Naive thymus-derived CD4-positive, alpha-beta T cell (primary cell): ENCODE measurements at regions of chr2 and their contacts with region 1.

Region 1: DNA sequence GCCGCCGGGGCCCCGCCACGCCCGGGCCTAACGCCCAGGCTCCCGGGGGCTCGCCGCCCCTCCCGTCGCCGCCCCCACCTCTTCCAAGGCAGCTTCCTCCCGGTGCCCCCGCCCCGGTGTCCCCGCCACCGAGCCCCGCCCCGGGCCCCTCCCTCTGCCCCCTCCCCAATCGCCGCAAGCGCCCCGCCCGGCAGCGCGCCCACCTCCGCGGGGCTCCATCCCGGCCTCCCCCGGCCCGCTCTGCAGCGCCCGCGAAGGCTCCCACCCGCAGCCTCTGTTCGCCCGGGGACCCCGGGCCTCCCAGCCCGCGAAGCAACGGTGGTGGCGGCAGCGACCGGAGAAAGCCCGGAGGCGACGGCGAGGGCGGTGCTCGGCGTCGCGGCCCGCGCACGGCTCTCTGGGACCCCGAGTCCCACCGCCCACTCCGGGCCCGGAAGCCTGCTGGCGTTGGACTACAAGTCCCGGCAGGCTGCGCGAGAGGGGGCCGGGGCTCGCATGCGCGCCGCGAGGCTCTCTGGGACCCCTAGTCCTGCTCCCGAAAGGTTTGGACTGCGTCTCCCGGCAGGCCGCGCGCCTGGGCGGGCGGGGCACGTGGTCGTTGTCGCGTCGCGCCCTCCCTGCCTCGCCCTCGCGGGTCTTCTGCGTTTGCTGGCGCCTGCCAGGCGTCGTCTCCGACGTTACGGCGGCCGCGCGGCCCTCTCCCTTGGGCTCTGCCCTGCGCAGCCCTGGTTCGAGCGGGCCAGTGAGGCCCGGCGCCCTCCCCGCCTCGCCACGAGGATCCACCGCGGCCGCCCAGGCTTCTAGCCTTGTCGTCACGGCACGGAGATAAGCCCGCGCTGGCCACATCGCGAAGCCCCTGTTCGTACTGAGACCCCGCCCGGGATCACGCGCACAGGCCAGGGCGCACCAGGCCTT is at the start of gene STK25:
- DNase-seq: peak; percentile 93 to 98 (median 97)
- ATAC-seq: peak; percentile 96
- H3K4me3 ChIP-seq: peak within 1 kb of the TSS; percentile 70
- H3K4me3 Mint-ChIP-seq: peak within 1 kb of the TSS; percentile 80 to 92 (median 86)
- H3K27ac ChIP-seq: peak within 1 kb of the TSS; percentile 81
- H3K27ac Mint-ChIP-seq: peak within 1 kb of the TSS; percentile 67 to 91 (median 85)
- H3K4me1 ChIP-seq: peaks cover 7 to 16% of the 10 kb centered on the region in 2 donors
- H3K4me1 Mint-ChIP-seq: peaks cover 17 to 33% (median 24%) of the 10 kb centered on the region in 7 donors
- H3K27me3 ChIP-seq: no peaks in the 10 kb centered on the region
- H3K27me3 Mint-ChIP-seq: peaks cover 0 to 1% (median 0%) of the 10 kb centered on the region in 5 donors
- total RNA-seq, gene STK25: 90.8 to 170 (median 115) TPM

Region 2: GRCh38 chr2:240021488-240022104 is 1486.9 kb before region 1 on chr2:
- CTCF ChIA-PET with region 1: no interaction called
- POLR2A ChIA-PET with region 1: no interaction called
- intact Hi-C with region 1: loop called in 1 of 2 experiments (anchors 5 kb)
- DNase-seq: peak; percentile 18 to 68 (median 51)
- ATAC-seq: peak; percentile 43
- H3K4me3 ChIP-seq: no peak overlapping the region
- H3K4me3 Mint-ChIP-seq: no peak overlapping the region
- H3K27ac ChIP-seq: no peak overlapping the region
- H3K27ac Mint-ChIP-seq: peak overlapping the region in 1 of 9 donors; percentile 32
- H3K4me1 ChIP-seq: peaks cover 8 to 15% of the 10 kb centered on the region in 2 donors
- H3K4me1 Mint-ChIP-seq: peaks cover 15 to 39% (median 35%) of the 10 kb centered on the region in 7 donors
- H3K27me3 ChIP-seq: no peaks in the 10 kb centered on the region
- H3K27me3 Mint-ChIP-seq: peaks cover 0 to 2% (median 0%) of the 10 kb centered on the region in 5 donors

Region 3: DNA sequence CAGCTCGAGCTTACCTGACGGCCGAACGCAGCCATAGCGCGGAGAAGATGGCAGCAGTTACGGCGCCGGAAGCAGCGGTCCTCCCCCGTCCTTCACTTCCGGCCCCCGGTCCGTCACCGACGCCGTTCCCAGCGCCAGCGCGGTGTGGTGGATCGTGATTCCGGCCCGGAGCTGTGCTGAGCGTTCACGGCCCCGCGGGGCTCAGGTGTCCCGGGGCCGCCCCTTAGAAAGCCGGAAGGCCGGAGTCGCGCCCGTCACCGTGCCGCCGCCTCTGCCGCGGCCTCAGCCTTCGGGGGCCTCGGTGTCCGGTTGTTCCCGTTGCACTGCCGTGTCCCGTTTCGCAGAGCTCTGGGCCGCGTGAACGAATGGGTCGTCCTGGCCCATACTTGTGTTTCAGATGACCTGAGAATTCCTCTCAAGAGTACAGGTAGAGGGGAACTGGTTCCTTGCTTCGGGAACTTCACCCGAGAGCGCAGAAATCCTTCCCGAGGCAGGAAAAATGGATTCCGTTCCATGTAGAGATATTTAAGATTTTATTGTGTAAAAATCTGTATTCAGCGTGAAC is 406.2 kb before region 1 on chr2 and contains the start of gene MTERF4:
- CTCF ChIA-PET with region 1: no interaction called
- POLR2A ChIA-PET with region 1: no interaction called
- intact Hi-C with region 1: loop called in 1 of 2 experiments (anchors 1 kb)
- DNase-seq: peak; percentile 80 to 91 (median 86)
- ATAC-seq: peak; percentile 98
- H3K4me3 ChIP-seq: peak within 1 kb of the TSS; percentile 89
- H3K4me3 Mint-ChIP-seq: peak within 1 kb of the TSS; percentile 86 to 99 (median 96)
- H3K27ac ChIP-seq: peak within 1 kb of the TSS; percentile 92
- H3K27ac Mint-ChIP-seq: peak within 1 kb of the TSS; percentile 96 to 99 (median 99)
- H3K4me1 ChIP-seq: peaks cover 29 to 55% of the 10 kb centered on the region in 2 donors
- H3K4me1 Mint-ChIP-seq: peaks cover 27 to 84% (median 64%) of the 10 kb centered on the region in 7 donors
- H3K27me3 ChIP-seq: no peaks in the 10 kb centered on the region
- H3K27me3 Mint-ChIP-seq: no peaks in the 10 kb centered on the region
- total RNA-seq, gene MTERF4: 45.3 to 214 (median 91.8) TPM

Region 4: GRCh38 chr2:241271641-241272297 is 236.7 kb before region 1 on chr2:
- CTCF ChIA-PET with region 1: no interaction called
- POLR2A ChIA-PET with region 1: no interaction called
- intact Hi-C with region 1: loop called (anchors 1 to 2 kb)
- DNase-seq: peak; percentile 37 to 69 (median 42)
- ATAC-seq: peak; percentile 83
- H3K4me3 ChIP-seq: peak overlapping the region; percentile 63
- H3K4me3 Mint-ChIP-seq: peak overlapping the region; percentile 91 to 97 (median 94)
- H3K27ac ChIP-seq: peak overlapping the region; percentile 76
- H3K27ac Mint-ChIP-seq: peak overlapping the region; percentile 70 to 94 (median 89)
- H3K4me1 ChIP-seq: peaks cover 8 to 16% of the 10 kb centered on the region in 2 donors
- H3K4me1 Mint-ChIP-seq: peaks cover 41 to 65% (median 60%) of the 10 kb centered on the region in 7 donors
- H3K27me3 ChIP-seq: no peaks in the 10 kb centered on the region
- H3K27me3 Mint-ChIP-seq: no peaks in the 10 kb centered on the region

Region 5: DNA sequence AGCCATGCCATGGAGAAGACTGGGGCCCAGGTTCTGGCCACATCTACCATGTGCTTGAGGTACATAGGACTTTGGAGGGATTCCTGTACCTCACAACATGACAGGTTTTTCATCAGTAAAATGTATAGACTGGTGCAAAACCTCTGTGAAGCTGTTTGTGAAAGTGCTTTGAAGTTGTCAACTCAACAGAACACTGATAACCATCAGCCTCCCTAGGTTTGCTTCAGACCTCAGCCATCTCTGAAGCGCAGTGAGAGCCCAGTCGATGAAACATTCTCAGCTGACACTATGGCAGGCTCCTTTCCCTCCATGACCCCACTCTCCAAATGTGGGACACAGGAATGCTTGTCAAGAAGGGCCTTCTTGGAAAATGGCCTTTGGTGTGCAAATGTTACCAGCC is 38.8 kb before region 1 on chr2:
- CTCF ChIA-PET with region 1: no interaction called
- POLR2A ChIA-PET with region 1: no interaction called
- intact Hi-C with region 1: no loop called
- DNase-seq: no peak
- ATAC-seq: no peak
- H3K4me3 ChIP-seq: no peak overlapping the region
- H3K4me3 Mint-ChIP-seq: no peak overlapping the region
- H3K27ac ChIP-seq: no peak overlapping the region
- H3K27ac Mint-ChIP-seq: no peak overlapping the region
- H3K4me1 ChIP-seq: no peaks in the 10 kb centered on the region
- H3K4me1 Mint-ChIP-seq: peaks cover 0 to 6% (median 2%) of the 10 kb centered on the region in 7 donors
- H3K27me3 ChIP-seq: no peaks in the 10 kb centered on the region
- H3K27me3 Mint-ChIP-seq: peaks cover 12 to 32% (median 19%) of the 10 kb centered on the region in 5 donors

Region 6: DNA sequence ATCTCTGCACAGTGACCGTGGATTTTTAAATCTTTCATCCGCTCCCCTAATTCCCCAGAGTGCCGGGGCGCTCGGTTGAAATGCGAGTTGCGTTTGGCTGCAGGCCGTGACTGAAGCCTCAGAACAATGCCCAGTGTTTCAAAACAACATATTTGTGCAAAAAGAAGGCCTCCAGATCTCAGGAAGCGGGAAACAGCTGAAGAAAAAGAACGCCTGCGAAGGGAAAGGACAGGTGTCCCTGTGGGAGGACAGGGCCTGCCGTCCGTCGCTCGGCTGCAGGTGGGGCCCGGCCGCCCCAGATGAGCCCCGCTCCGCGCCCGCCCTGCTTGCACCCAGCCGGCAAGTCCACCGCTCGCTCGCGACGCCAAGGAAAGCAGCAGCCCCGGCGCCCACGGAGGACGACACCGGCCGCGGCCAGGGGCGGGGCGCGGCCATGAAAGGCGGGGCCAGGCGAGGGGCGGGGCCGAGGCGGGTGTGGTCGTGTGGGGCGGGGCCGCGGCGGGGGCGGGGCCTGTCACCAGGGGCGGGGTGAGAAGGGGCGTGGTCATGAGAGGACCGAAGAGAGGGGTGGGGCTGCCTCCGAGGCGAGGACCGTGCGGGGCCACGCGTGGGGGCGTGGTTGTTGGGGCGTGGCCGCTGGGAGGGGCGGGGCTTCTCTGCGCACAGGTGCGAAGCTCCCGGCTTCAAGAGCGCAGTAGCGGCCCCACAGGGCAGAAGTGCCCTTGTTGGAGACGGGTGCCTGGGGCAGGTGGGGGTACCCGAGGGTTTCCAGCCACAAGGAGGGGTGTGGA is 32.5 kb after region 1 on chr2:
- CTCF ChIA-PET with region 1: no interaction called
- POLR2A ChIA-PET with region 1: no interaction called
- intact Hi-C with region 1: loop called in 1 of 2 experiments (anchors 1 kb)
- DNase-seq: peak; percentile 37 to 82 (median 49)
- ATAC-seq: peak; percentile 92
- H3K4me3 ChIP-seq: no peak overlapping the region
- H3K4me3 Mint-ChIP-seq: peak overlapping the region; percentile 53 to 84 (median 62)
- H3K27ac ChIP-seq: no peak overlapping the region
- H3K27ac Mint-ChIP-seq: no peak overlapping the region
- H3K4me1 ChIP-seq: no peaks in the 10 kb centered on the region
- H3K4me1 Mint-ChIP-seq: peaks cover 0 to 8% (median 4%) of the 10 kb centered on the region in 7 donors
- H3K27me3 ChIP-seq: peaks cover 0 to 3% of the 10 kb centered on the region in 2 donors
- H3K27me3 Mint-ChIP-seq: peaks cover 11 to 29% (median 19%) of the 10 kb centered on the region in 5 donors

Region 7: GRCh38 chr2:241637000-241637791 is 128.7 kb after region 1 on chr2 and contains the starts of genes ATG4B and THAP4:
- CTCF ChIA-PET with region 1: no interaction called
- POLR2A ChIA-PET with region 1: no interaction called
- intact Hi-C with region 1: loop called (anchors 1 kb)
- DNase-seq: peak; percentile 61 to 89 (median 79)
- ATAC-seq: peak; percentile 82
- H3K4me3 ChIP-seq: peak within 1 kb of the TSS; percentile 99
- H3K4me3 Mint-ChIP-seq: peak within 1 kb of the TSS; percentile 85 to 98 (median 92)
- H3K27ac ChIP-seq: peak within 1 kb of the TSS; percentile 99
- H3K27ac Mint-ChIP-seq: peak within 1 kb of the TSS; percentile 48 to 98 (median 94)
- H3K4me1 ChIP-seq: peaks cover 26 to 27% of the 10 kb centered on the region in 2 donors
- H3K4me1 Mint-ChIP-seq: peaks cover 43 to 63% (median 55%) of the 10 kb centered on the region in 7 donors
- H3K27me3 ChIP-seq: no peaks in the 10 kb centered on the region
- H3K27me3 Mint-ChIP-seq: no peaks in the 10 kb centered on the region
- total RNA-seq, gene ATG4B: 87.2 to 131 (median 95.0) TPM
- total RNA-seq, gene THAP4: 26.4 to 34.8 (median 28.1) TPM